ENCODE measurements at regions of chr6 and their contacts with region 1.

Region 1: DNA sequence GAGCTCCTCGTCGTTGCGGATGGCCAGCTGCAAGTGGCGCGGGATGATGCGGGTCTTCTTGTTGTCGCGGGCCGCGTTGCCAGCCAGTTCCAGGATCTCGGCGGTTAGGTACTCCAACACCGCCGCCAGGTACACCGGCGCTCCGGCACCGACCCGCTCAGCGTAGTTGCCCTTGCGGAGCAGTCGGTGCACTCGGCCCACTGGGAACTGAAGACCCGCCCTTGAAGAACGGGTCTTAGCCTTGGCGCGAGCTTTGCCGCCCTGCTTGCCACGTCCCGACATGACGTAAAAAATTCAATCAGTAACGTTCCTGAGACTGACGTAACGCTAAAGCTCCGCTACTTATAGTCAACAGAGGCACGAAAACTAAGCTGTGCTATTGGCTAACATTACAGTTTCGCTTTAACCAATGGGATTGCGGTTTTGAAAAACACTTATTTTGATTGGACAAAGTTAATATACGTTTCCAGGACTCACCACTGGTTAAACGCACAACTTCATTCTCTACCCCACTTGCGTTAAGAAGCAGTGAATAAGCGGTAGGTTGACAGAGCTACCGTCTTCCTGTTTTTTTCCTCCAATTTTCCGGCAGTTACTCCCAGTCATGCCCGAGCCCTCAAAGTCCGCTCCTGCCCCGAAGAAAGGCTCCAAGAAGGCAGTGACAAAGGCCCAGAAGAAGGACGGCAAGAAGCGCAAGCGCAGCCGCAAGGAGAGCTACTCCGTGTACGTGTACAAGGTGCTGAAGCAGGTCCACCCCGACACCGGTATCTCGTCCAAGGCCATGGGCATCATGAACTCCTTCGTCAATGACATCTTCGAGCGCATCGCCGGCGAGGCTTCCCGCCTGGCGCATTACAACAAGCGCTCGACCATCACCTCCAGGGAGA is 73.9 kb downstream of the OR2B2 start:
- DNase-seq: peak; percentile 72 to 83
- H3K4me3 ChIP-seq: peak overlapping the region; percentile 55 to 77 (median 60)
- H3K27ac ChIP-seq: peak overlapping the region; percentile 95 to 100
- H3K4me1 ChIP-seq: peaks cover 0 to 13% of the 10 kb centered on the region in 2 donors
- H3K27me3 ChIP-seq: no peaks in the 10 kb centered on the region
- CTCF ChIP-seq: peak in 2 of 3 donors; percentile 32 to 68
- POLR2A ChIP-seq: peak; percentile 73

Region 2: GRCh38 chr6:27882624-27883023 is 44.3 kb after region 1 on chr6:
- intact Hi-C with region 1: loop called (anchors 1 kb)
- DNase-seq: no peak
- H3K4me3 ChIP-seq: no peak overlapping the region
- H3K27ac ChIP-seq: no peak overlapping the region
- H3K4me1 ChIP-seq: no peaks in the 10 kb centered on the region
- H3K27me3 ChIP-seq: peaks cover 0 to 4% of the 10 kb centered on the region in 2 donors
- CTCF ChIP-seq: no peak
- POLR2A ChIP-seq: no peak

Region 3: DNA sequence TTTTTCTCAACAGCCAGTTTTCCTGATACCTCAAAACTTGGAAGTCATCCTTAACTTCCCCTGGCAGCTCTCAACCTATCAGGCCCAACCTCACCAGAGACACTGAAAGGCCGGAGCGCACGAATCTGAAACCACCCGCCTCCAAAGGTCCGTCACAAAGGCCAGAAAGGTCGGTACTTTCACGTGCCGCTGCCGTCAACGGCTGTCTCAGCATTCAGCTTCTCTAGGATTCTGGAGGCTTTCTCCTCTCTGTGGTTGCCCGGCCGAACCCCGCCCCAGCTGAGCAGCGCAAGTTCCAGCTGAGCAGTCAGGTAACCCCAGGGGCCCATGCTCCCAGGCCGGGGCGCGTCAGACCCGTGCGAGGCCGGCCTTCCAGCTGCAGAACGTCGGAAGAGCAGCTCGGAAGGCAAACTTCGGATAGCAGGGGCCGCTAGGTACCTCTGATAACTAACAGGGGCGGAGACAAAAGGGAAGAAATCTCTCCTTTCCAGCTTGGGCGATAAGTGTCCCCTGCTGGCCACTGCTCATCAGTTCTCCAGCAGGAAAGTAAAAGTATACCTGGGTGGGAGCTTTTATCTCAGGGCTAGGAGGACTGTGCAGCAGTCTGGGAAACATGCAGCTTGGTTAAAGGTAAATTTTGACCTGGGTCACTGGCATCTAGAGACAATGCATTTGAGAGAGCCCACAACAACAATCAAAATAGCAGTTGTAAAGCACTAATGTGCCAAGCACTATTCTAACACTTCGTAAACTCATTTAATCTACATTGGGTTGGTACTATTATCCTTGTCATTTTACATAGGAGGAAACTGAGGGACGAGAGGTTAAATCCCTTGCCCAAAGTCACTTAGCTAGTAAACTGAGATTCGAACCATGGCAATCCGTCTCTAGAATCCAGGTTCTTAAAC is 545.2 kb after region 1 on chr6:
- intact Hi-C with region 1: no loop called
- DNase-seq: peak; percentile 80 to 87
- H3K4me3 ChIP-seq: peak overlapping the region; percentile 51 to 73 (median 57)
- H3K27ac ChIP-seq: peak overlapping the region; percentile 80 to 84
- H3K4me1 ChIP-seq: no peaks in the 10 kb centered on the region
- H3K27me3 ChIP-seq: no peaks in the 10 kb centered on the region
- CTCF ChIP-seq: peak in 2 of 3 donors; percentile 40 to 48
- POLR2A ChIP-seq: no peak

Region 4: GRCh38 chr6:28940858-28941680 is 1102.8 kb after region 1 on chr6:
- intact Hi-C with region 1: loop called (anchors 5 kb)
- DNase-seq: peak in 1 of 2 donors; percentile 82
- H3K4me3 ChIP-seq: peak overlapping the region; percentile 45 to 82 (median 79)
- H3K27ac ChIP-seq: peak overlapping the region; percentile 93 to 97
- H3K4me1 ChIP-seq: peaks cover 0 to 7% of the 10 kb centered on the region in 2 donors
- H3K27me3 ChIP-seq: no peaks in the 10 kb centered on the region
- CTCF ChIP-seq: no peak
- POLR2A ChIP-seq: no peak